Motor neuron (in vitro differentiated cells): ENCODE measurements at regions of chr16 and their contacts with region 1.

Region 1: DNA sequence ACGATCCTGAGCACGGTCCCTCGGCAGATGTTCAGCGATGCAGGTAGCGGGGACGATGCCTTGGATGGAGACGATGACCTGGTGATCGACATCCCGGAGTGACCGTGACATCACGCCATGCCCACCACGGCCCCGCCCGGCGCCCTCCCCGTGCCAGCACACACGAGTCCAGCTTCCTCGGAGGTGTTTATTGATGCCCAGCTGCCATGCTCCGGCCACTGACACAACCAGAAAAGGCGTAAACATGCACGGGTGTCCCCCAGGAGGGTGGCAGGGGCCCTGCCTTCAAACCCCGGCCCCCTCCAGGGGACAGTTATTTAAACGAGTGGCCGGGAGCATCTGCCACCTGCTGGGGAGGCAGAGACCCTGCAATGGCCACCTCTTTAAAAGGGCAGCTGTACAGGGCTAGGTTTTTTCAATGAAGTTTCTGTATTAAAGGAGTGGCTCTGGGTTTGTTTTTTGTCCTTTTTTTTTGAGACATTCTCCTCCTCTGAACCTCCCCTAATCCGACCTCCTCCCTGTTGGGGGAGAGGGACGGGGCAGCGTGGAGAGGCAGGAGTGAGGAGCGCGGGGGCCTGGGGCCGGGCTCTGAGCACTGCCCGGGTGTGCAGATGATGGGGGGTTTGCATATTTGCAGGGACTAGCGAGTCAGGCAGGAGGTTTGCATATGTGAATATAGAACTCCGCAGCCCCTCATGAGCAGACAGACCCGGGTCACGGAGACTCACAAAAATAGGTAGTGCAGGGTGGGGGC is 5.3 kb downstream of the DOC2A start:
- ATAC-seq: peak; percentile 44 to 74 (median 51)
- H3K4me3 ChIP-seq: no peak overlapping the region
- H3K27ac ChIP-seq: no peak overlapping the region
- H3K4me1 ChIP-seq: peaks cover 11 to 13% of the 10 kb centered on the region in 2 donors

Region 2: DNA sequence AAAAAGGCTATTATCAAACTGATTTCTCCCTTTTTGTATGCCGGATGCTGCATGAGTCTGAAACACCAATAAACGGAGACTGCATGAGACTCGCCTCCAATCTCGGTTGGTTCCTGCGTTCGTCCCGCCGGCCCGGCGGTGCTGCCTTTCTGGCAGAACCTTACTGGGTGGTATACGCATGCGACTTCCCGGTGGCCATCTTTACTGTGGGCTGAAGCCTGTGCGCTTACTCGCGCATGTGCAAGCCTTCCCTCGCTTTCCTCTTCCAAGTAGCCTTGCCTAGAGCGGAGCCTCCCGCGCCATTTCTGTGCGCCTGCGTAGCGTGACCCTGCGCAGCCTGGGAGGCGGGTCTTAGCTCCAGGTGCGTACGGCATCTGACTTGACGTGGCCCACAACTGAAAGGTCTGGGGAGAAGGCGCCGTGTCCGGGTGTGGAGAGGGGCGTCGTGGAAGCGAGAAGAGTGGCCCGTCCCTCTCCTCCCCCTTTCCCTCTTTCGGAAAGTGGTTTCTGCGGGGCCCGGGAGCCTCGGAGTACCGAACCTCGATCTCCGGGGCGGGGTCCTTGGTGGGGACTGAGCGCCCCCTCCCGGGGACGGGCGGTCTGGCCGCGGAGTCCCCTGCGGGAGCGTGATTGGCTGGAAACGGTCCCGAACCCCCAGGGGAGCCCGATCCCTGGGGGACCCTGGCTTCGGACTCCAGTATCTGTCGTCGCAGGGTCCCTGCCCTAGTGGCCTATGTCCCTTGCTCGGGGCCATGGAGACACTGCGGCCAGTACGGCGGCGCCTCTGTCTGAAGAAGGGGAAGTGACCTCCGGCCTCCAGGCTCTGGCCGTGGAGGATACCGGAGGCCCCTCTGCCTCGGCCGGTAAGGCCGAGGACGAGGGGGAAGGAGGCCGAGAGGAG is 189.5 kb before region 1 on chr16 and contains the start of gene PAGR1:
- in situ Hi-C with region 1: loop called in 3 of 9 experiments (anchors 25 kb)
- ATAC-seq: peak; percentile 48 to 70 (median 62)
- H3K4me3 ChIP-seq: peak within 1 kb of the TSS; percentile 49 to 86 (median 72)
- H3K27ac ChIP-seq: peak within 1 kb of the TSS; percentile 96 to 97
- H3K4me1 ChIP-seq: peaks cover 12 to 33% of the 10 kb centered on the region in 2 donors
- total RNA-seq, gene PAGR1: 13.7 to 53.0 (median 28.2) TPM

Region 3: GRCh38 chr16:29848420-29849297 is 156.9 kb before region 1 on chr16:
- in situ Hi-C with region 1: loop called in 1 of 9 experiments (anchors 25 kb)
- ATAC-seq: peak; percentile 18 to 83 (median 34)
- H3K4me3 ChIP-seq: no peak overlapping the region
- H3K27ac ChIP-seq: no peak overlapping the region
- H3K4me1 ChIP-seq: no peaks in the 10 kb centered on the region

Region 4: GRCh38 chr16:30395155-30395991 is 389.9 kb after region 1 on chr16 and contains the start of gene ZNF48:
- in situ Hi-C with region 1: no loop called
- ATAC-seq: peak; percentile 91 to 95 (median 94)
- H3K4me3 ChIP-seq: peak within 1 kb of the TSS; percentile 93 to 98 (median 95)
- H3K27ac ChIP-seq: peak within 1 kb of the TSS; percentile 93 to 99
- H3K4me1 ChIP-seq: peaks cover 11 to 23% of the 10 kb centered on the region in 2 donors
- total RNA-seq, gene ZNF48: 2.2 to 49.5 (median 18.4) TPM

Region 5: GRCh38 chr16:30805370-30806169 is 800.1 kb after region 1 on chr16:
- in situ Hi-C with region 1: no loop called
- ATAC-seq: peak; percentile 92 to 97 (median 94)
- H3K4me3 ChIP-seq: peak overlapping the region; percentile 85 to 99 (median 89)
- H3K27ac ChIP-seq: peak overlapping the region; percentile 84 to 89
- H3K4me1 ChIP-seq: peaks cover 8 to 10% of the 10 kb centered on the region in 2 donors